CD8-positive, alpha-beta T cell (primary cell): ENCODE measurements at regions of chr16 and their contacts with region 1.

Region 1: GRCh38 chr16:85253084-85253941 is 141.0 kb upstream of the CIBAR2 start:
- DNase-seq: peak; percentile 45 to 77 (median 69)
- ATAC-seq: peak; percentile 90
- H3K4me3 ChIP-seq: no peak overlapping the region
- H3K4me3 Mint-ChIP-seq: no peak overlapping the region
- H3K27ac ChIP-seq: no peak overlapping the region
- H3K27ac Mint-ChIP-seq: no peak overlapping the region
- H3K4me1 ChIP-seq: peaks cover 4% of the 10 kb centered on the region
- H3K4me1 Mint-ChIP-seq: no peaks in the 10 kb centered on the region
- H3K27me3 ChIP-seq: peaks cover 0 to 1% of the 10 kb centered on the region in 2 experiments
- H3K27me3 Mint-ChIP-seq: peaks cover 10% of the 10 kb centered on the region
- CTCF ChIP-seq: peak; percentile 87

Region 2: GRCh38 chr16:85238233-85238647 is 15.1 kb before region 1 on chr16:
- CTCF ChIA-PET with region 1: interaction called, 20 read pairs
- POLR2A ChIA-PET with region 1: no interaction called
- intact Hi-C with region 1: no loop called
- DNase-seq: no peak
- ATAC-seq: no peak
- H3K4me3 ChIP-seq: no peak overlapping the region
- H3K4me3 Mint-ChIP-seq: no peak overlapping the region
- H3K27ac ChIP-seq: no peak overlapping the region
- H3K27ac Mint-ChIP-seq: no peak overlapping the region
- H3K4me1 ChIP-seq: peaks cover 11% of the 10 kb centered on the region
- H3K4me1 Mint-ChIP-seq: peaks cover 4% of the 10 kb centered on the region
- H3K27me3 ChIP-seq: peaks cover 9 to 12% of the 10 kb centered on the region in 2 experiments
- H3K27me3 Mint-ChIP-seq: peaks cover 20% of the 10 kb centered on the region
- CTCF ChIP-seq: no peak